A673 (cell line): ENCODE measurements at regions of chr4 and their contacts with region 1.

Region 1: GRCh38 chr4:8594097-8595038 is 1.8 kb downstream of the CPZ start:
- DNase-seq: peak; percentile 55
- H3K4me3 ChIP-seq: no peak overlapping the region
- H3K27ac ChIP-seq: no peak overlapping the region
- H3K4me1 ChIP-seq: no peaks in the 10 kb centered on the region
- H3K27me3 ChIP-seq: peaks cover 45% of the 10 kb centered on the region
- CTCF ChIP-seq: peak; percentile 76

Region 2: GRCh38 chr4:8274765-8275547 is 319.4 kb before region 1 on chr4:
- CTCF ChIA-PET with region 1: no interaction called
- POLR2A ChIA-PET with region 1: no interaction called
- intact Hi-C with region 1: no loop called
- DNase-seq: peak; percentile 97
- H3K4me3 ChIP-seq: no peak overlapping the region
- H3K27ac ChIP-seq: peak overlapping the region; percentile 76
- H3K4me1 ChIP-seq: peaks cover 48% of the 10 kb centered on the region
- H3K27me3 ChIP-seq: peaks cover 12% of the 10 kb centered on the region
- CTCF ChIP-seq: peak; percentile 58

Region 3: DNA sequence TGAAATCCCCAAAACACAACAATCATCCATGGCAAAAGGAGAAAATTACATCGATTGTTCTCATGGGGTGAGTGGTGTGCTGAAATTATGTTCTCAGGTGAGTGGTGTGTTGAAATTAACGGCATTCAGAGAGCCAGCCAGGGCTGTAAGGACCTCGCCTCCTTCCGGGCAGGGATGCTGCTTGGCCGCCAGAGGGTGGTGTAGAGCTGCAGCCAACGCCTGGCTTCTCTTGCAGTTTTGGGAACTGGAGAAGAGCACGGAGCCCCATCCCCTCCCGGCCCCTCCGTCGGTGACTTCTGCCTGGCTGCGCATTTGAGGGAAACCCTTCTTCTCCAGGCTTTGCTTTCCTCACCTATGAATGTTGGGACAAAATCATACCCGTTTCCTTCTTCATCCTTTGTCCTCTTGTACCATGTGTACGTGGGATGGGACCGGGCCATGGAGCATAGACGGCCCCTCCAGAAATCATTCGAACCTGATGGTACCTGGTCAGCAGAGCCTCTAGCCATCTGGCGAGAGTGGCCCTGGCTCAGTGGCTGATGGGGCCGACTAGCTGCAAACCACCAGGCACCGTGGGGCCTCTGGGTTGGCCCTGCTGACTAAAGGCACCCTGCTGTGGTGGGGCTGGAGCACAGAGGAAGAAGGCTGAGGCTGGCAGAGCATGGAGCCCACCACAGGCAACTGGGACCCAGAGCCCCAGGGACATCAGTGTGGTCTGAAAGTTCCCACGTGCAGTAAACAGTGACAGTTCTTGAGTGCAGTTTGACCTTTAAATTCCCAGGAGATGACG is 125.4 kb before region 1 on chr4:
- CTCF ChIA-PET with region 1: interaction called, 3 read pairs
- POLR2A ChIA-PET with region 1: interaction called, 3 read pairs
- intact Hi-C with region 1: loop called (anchors 1 kb)
- DNase-seq: peak; percentile 70
- H3K4me3 ChIP-seq: no peak overlapping the region
- H3K27ac ChIP-seq: no peak overlapping the region
- H3K4me1 ChIP-seq: peaks cover 3% of the 10 kb centered on the region
- H3K27me3 ChIP-seq: no peaks in the 10 kb centered on the region
- CTCF ChIP-seq: peak; percentile 93

Region 4: DNA sequence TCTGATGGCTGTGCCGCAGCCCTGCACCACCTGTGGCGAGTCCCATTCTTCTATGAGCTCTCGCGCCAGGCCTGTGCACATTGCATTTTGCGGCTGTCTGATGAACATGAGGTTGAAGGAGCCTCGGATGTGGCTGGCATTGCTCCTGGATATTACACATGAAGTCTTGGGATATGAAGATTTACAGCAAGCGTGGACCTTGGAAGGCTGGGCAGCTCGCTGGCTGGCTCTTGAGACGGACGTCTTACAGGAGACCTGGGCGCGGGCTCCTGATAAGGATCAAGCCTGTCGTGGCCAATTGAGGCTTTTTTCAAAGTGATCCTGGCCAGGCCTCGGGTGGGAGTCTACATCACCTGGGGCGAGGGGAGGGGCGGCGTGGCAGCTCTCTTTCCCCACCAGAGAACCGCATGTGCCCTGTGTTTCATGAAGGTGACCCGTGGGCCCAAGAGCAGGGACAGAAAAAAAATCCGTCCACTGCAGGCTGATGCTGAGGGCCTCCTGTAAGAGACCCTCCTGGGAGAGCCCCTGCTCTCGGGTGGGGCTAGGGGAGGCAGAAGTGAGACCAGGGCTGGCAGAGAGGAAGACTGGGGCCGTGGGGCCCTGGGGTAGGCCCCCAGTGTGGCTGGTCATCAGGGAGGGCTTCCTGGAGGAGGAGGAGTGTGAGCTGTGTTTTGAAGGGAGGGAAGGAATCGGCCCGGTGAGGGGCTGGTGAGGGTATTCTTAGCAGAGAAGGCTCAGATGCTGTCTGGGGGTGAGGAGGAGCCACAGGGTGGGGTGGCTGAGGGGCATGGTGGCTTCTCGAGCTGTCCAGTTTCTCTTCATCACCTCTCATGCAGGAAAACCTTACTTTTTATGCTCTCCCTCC is 21.8 kb after region 1 on chr4:
- CTCF ChIA-PET with region 1: interaction called, 13 read pairs
- POLR2A ChIA-PET with region 1: no interaction called
- intact Hi-C with region 1: no loop called
- DNase-seq: no peak
- H3K4me3 ChIP-seq: no peak overlapping the region
- H3K27ac ChIP-seq: no peak overlapping the region
- H3K4me1 ChIP-seq: no peaks in the 10 kb centered on the region
- H3K27me3 ChIP-seq: no peaks in the 10 kb centered on the region
- CTCF ChIP-seq: no peak